ENCODE measurements at regions of chr19 and their contacts with region 1.

Region 1: DNA sequence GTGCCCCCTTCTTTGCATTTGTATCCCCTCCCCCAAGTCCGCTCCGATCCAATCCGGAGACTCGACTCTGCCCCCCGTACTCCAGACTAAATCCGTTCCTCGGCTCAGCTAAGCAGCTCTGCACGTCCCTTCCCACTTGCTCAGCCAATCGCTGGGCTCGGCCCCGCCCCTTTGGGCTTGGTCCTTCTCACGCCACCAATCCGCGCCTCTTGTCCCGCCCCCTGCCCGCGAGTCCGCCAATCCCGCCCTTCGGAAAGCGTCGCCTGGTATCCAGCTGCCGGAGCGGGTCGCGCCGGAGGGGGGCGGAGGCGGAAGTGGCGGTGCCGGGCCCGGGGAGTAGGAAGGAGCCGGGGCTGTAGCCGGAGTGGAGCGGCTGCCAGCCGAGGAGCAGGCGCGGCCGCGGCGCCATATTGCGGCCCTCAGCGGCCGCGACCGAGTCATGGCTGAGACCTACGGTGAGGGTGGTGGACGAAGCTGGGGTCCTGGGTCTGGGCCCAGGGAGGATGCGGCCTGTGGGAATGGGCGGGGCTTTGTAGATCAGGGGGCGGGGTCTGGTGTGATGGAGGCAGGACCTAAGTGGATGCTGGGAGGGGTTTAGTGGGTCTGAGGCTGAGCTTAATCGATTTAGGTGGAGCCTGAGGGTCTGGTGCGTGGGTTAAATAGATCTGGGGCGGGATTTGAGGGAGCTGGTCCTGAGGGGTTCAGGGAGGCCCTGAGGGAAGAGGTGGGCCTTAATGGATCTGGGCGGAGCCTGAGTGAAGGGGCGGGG is at the start of gene RAB4B:
- DNase-seq: peak; percentile 100
- H3K4me3 ChIP-seq: peak within 1 kb of the TSS; percentile 72
- H3K4me3 Mint-ChIP-seq: peak within 1 kb of the TSS; percentile 81
- H3K27ac Mint-ChIP-seq: peak within 1 kb of the TSS; percentile 83
- H3K4me1 ChIP-seq: peaks cover 6% of the 10 kb centered on the region; the same call in 1 of the 2 replicates
- H3K4me1 Mint-ChIP-seq: peaks cover 18% of the 10 kb centered on the region
- H3K27me3 ChIP-seq: no peaks in the 10 kb centered on the region
- H3K27me3 Mint-ChIP-seq: no peaks in the 10 kb centered on the region
- CTCF ChIP-seq: no peak
- total RNA-seq, gene RAB4B: 19.9 and 21.5 TPM in 2 replicates

Region 2: GRCh38 chr19:40603389-40604135 is 174.6 kb before region 1 on chr19:
- CTCF ChIA-PET with region 1: interaction called, 15 read pairs
- POLR2A ChIA-PET with region 1: interaction called, 8 read pairs
- intact Hi-C with region 1: no loop called
- DNase-seq: peak; percentile 100
- H3K4me3 ChIP-seq: peak overlapping the region; percentile 24
- H3K4me3 Mint-ChIP-seq: peak overlapping the region; percentile 87
- H3K27ac Mint-ChIP-seq: peak overlapping the region; percentile 72
- H3K4me1 ChIP-seq: peaks cover 54% of the 10 kb centered on the region
- H3K4me1 Mint-ChIP-seq: peaks cover 52% of the 10 kb centered on the region
- H3K27me3 ChIP-seq: no peaks in the 10 kb centered on the region; the same call in 1 of the 2 replicates
- H3K27me3 Mint-ChIP-seq: peaks cover 11% of the 10 kb centered on the region
- CTCF ChIP-seq: peak in 1 of 2 experiments; percentile 12

Region 3: GRCh38 chr19:40716655-40717324 is 61.3 kb before region 1 on chr19 and contains the starts of genes COQ8B and ITPKC:
- CTCF ChIA-PET with region 1: no interaction called
- POLR2A ChIA-PET with region 1: interaction called, 28 read pairs
- intact Hi-C with region 1: loop called (anchors 1 kb)
- DNase-seq: peak; percentile 100
- H3K4me3 ChIP-seq: peak within 1 kb of the TSS; percentile 71
- H3K4me3 Mint-ChIP-seq: peak within 1 kb of the TSS; percentile 84
- H3K27ac Mint-ChIP-seq: peak within 1 kb of the TSS; percentile 93
- H3K4me1 ChIP-seq: peaks cover 6% of the 10 kb centered on the region; the same call in 1 of the 2 replicates
- H3K4me1 Mint-ChIP-seq: peaks cover 18% of the 10 kb centered on the region
- H3K27me3 ChIP-seq: no peaks in the 10 kb centered on the region
- H3K27me3 Mint-ChIP-seq: no peaks in the 10 kb centered on the region
- CTCF ChIP-seq: no peak
- total RNA-seq, gene COQ8B: 30.9 and 35.7 TPM in 2 replicates
- total RNA-seq, gene ITPKC: 28.5 and 31.2 TPM in 2 replicates

Region 4: GRCh38 chr19:40750059-40750873 is 27.9 kb before region 1 on chr19 and contains the start of gene ACTMAP:
- CTCF ChIA-PET with region 1: interaction called, 8 read pairs
- POLR2A ChIA-PET with region 1: interaction called, 147 read pairs
- intact Hi-C with region 1: loop called (anchors 1 kb)
- DNase-seq: peak; percentile 100
- H3K4me3 ChIP-seq: peak within 1 kb of the TSS; percentile 73
- H3K4me3 Mint-ChIP-seq: peak within 1 kb of the TSS; percentile 93
- H3K27ac Mint-ChIP-seq: peak within 1 kb of the TSS; percentile 98
- H3K4me1 ChIP-seq: peaks cover 28% of the 10 kb centered on the region
- H3K4me1 Mint-ChIP-seq: peaks cover 27% of the 10 kb centered on the region
- H3K27me3 ChIP-seq: no peaks in the 10 kb centered on the region
- H3K27me3 Mint-ChIP-seq: no peaks in the 10 kb centered on the region
- CTCF ChIP-seq: no peak
- total RNA-seq, gene ACTMAP: 28.0 and 29.2 TPM in 2 replicates

Region 5: DNA sequence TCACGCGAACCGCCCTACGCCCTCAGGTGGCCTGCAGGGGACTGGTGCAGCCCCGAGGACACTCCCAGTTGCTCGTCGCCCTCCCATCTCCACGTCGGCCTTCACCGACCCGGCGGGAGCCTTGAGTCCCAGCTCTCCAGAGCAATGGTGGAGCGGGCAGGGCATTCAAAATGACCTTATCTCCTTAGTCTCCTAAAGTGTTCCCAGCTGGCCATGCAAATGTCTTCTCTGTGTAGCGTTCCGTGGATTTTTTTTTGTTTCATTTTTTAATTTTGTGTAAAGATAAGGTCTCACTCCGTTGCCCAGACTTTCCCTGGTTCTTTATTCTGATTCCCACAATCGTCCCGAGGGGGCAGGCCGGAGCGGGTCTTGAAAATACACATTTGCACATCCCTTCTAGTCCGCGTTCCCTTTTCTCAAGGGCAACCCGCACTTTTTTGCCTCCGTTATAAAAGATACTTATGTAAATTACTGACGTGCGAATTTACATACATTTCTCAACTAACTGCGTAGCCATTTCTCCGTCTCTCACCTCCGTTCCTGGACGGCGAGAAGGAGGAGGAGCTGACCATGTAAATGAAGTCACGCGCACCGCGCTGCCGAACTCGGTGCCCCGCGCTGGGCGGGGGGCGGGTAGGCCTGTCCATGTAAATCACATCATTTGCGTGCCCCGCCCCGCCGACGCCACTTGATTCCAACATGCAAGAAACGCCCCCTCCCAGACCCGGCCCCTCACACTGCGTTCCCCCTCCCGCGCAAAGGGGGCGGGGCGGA is 20.3 kb after region 1 on chr19:
- CTCF ChIA-PET with region 1: interaction called, 49 read pairs
- POLR2A ChIA-PET with region 1: interaction called, 39 read pairs
- intact Hi-C with region 1: loop called (anchors 1 kb)
- DNase-seq: peak; percentile 100
- H3K4me3 ChIP-seq: peak overlapping the region; percentile 50
- H3K4me3 Mint-ChIP-seq: peak overlapping the region; percentile 100
- H3K27ac Mint-ChIP-seq: peak overlapping the region; percentile 96
- H3K4me1 ChIP-seq: peaks cover 15% of the 10 kb centered on the region
- H3K4me1 Mint-ChIP-seq: peaks cover 10% of the 10 kb centered on the region
- H3K27me3 ChIP-seq: no peaks in the 10 kb centered on the region
- H3K27me3 Mint-ChIP-seq: no peaks in the 10 kb centered on the region
- CTCF ChIP-seq: peak; percentile 57 to 63

Region 6: GRCh38 chr19:41133260-41133659 is 355.1 kb after region 1 on chr19:
- CTCF ChIA-PET with region 1: no interaction called
- POLR2A ChIA-PET with region 1: interaction called, 12 read pairs
- intact Hi-C with region 1: no loop called
- DNase-seq: no peak
- H3K4me3 ChIP-seq: no peak overlapping the region
- H3K4me3 Mint-ChIP-seq: no peak overlapping the region
- H3K27ac Mint-ChIP-seq: no peak overlapping the region
- H3K4me1 ChIP-seq: no peaks in the 10 kb centered on the region
- H3K4me1 Mint-ChIP-seq: no peaks in the 10 kb centered on the region
- H3K27me3 ChIP-seq: no peaks in the 10 kb centered on the region
- H3K27me3 Mint-ChIP-seq: peaks cover 6% of the 10 kb centered on the region
- CTCF ChIP-seq: no peak

Measured in Caco-2 (cell line).